ENCODE measurements at regions of chr7 and their contacts with region 1.

Region 1: DNA sequence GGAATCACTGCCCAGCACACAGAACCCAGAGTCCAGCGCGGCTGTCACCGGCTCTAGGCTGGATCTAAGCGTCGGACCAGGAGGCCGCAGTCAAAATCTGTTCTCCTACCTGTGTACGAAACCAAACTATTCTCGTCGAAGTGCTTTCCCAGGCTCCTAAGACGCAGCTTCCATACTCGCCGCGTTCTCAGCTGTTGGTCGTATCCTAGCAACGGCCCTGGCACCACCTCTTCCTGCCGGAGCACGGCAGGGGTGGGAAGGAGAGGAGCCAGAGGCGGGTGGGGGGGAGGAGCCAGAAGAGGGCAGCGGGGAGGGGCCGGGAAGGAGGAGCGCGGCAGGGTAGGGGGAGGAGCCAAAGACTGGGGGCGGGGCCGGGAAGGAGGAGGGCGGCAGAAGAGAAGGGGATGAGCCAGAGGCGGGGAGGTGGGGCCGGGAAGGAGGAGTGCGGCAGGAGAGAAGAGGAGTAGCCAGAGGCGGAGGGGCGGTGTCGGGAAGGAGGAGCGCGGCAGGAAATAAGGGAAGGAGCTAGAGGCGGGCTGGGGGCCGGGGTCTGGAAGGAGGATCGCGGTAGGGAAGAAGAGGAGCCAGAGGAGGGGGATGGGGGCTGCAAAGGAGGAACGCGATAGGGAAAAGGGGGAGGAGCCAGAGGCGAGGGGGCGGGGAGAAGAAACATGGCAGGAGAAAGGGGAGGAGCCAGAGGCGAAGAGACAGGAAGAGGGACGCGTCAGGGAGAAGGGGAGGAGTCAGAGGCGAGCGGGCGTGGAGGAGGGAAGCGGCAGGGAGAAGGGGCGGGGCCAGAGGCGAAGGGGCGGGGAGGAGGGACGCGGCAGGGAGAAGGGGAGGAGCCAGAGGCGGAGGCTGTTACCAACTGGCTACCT is at the start of gene IQUB:
- DNase-seq: peak; percentile 82 to 97
- H3K4me3 ChIP-seq: peak within 1 kb of the TSS; percentile 96
- H3K27ac ChIP-seq: no peak within 1 kb of the TSS
- H3K4me1 ChIP-seq: peaks cover 23% of the 10 kb centered on the region
- H3K27me3 ChIP-seq: no peaks in the 10 kb centered on the region
- CTCF ChIP-seq: no peak
- total RNA-seq, gene IQUB: 0.33 and 0.98 TPM in 2 replicates

Region 2: GRCh38 chr7:122726881-122727280 is 807.7 kb before region 1 on chr7:
- CTCF ChIA-PET with region 1: no interaction called
- POLR2A ChIA-PET with region 1: interaction called, 10 read pairs
- intact Hi-C with region 1: no loop called
- DNase-seq: no peak
- H3K4me3 ChIP-seq: no peak overlapping the region
- H3K27ac ChIP-seq: no peak overlapping the region
- H3K4me1 ChIP-seq: no peaks in the 10 kb centered on the region
- H3K27me3 ChIP-seq: no peaks in the 10 kb centered on the region
- CTCF ChIP-seq: no peak

Region 3: GRCh38 chr7:123351516-123352505 is 182.8 kb before region 1 on chr7:
- CTCF ChIA-PET with region 1: no interaction called
- POLR2A ChIA-PET with region 1: no interaction called
- intact Hi-C with region 1: no loop called
- DNase-seq: no peak
- H3K4me3 ChIP-seq: no peak overlapping the region
- H3K27ac ChIP-seq: no peak overlapping the region
- H3K4me1 ChIP-seq: no peaks in the 10 kb centered on the region
- H3K27me3 ChIP-seq: no peaks in the 10 kb centered on the region
- CTCF ChIP-seq: no peak

Region 4: DNA sequence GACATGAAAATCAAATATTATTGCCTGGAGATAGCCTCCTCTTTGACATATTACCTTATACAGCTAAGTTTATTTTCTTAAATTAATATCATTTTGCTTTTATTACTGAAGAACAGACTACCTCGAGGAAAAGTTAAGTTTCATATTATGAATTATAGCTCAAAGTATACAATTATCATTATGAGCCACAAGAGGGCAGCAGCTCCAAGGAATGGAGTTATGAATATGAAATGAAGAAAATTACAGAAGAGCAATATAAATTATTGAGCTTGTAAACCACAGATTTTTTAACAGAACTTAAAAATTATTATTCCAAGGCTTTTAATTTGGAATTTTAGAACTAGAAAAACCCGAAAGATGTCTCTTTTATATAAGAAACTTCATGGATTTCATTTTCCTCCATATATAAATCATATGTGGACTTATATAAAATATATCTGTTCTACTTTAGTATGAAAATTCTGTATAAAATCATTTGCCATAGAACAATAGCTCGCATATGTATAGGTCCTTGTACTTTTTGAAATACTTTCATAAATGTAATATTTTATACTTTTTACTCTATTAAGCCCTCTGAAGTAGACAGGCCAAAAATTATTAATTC is 40.3 kb before region 1 on chr7:
- CTCF ChIA-PET with region 1: interaction called, 9 read pairs
- POLR2A ChIA-PET with region 1: no interaction called
- intact Hi-C with region 1: loop called (anchors 1 kb)
- DNase-seq: peak in 1 of 2 experiments; percentile 10
- H3K4me3 ChIP-seq: no peak overlapping the region
- H3K27ac ChIP-seq: no peak overlapping the region
- H3K4me1 ChIP-seq: no peaks in the 10 kb centered on the region
- H3K27me3 ChIP-seq: no peaks in the 10 kb centered on the region
- CTCF ChIP-seq: peak; percentile 87

Region 5: GRCh38 chr7:123580406-123581161 is 46.0 kb after region 1 on chr7:
- CTCF ChIA-PET with region 1: no interaction called
- POLR2A ChIA-PET with region 1: no interaction called
- intact Hi-C with region 1: loop called (anchors 2 kb)
- DNase-seq: peak; percentile 23 to 36
- H3K4me3 ChIP-seq: no peak overlapping the region
- H3K27ac ChIP-seq: no peak overlapping the region
- H3K4me1 ChIP-seq: no peaks in the 10 kb centered on the region
- H3K27me3 ChIP-seq: no peaks in the 10 kb centered on the region
- CTCF ChIP-seq: peak; percentile 82

Region 6: DNA sequence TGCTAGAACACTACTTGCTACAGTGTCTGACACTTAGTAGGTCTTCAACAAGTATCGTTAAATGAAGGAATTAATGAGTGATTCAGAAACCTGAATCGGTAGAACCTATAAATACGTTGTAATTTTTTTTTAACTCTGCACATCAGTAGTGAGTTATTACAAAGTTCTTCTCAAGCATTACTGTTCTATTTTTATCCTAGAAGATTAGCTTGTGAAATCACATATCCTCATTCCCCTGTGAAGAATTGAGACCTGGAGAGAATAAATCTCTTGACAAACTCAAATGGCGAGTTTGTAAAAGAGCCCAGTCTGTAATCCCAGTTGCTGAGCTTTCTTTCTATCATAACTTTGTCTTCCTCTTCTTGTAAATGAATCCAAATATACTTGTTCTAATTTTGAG is 345.0 kb after region 1 on chr7:
- CTCF ChIA-PET with region 1: interaction called, 5 read pairs
- POLR2A ChIA-PET with region 1: interaction called, 14 read pairs
- intact Hi-C with region 1: no loop called
- DNase-seq: no peak
- H3K4me3 ChIP-seq: no peak overlapping the region
- H3K27ac ChIP-seq: no peak overlapping the region
- H3K4me1 ChIP-seq: no peaks in the 10 kb centered on the region
- H3K27me3 ChIP-seq: no peaks in the 10 kb centered on the region
- CTCF ChIP-seq: no peak